Activated T-helper 1 cell treated with anti-CD3 and anti-CD28 coated beads, Interleukin-12 subunit alpha, Interleukin-12 subunit beta, Interleukin-2, Interleukin-4 antibody, amounts not matched to agents 30 ng/mL and 10 ng/mL and 1 ng/mL, durations not matched to agents 14 hours and 24 hours and 36 hours (primary cell): ENCODE measurements at regions of chr12 and their contacts with region 1.

Region 1: DNA sequence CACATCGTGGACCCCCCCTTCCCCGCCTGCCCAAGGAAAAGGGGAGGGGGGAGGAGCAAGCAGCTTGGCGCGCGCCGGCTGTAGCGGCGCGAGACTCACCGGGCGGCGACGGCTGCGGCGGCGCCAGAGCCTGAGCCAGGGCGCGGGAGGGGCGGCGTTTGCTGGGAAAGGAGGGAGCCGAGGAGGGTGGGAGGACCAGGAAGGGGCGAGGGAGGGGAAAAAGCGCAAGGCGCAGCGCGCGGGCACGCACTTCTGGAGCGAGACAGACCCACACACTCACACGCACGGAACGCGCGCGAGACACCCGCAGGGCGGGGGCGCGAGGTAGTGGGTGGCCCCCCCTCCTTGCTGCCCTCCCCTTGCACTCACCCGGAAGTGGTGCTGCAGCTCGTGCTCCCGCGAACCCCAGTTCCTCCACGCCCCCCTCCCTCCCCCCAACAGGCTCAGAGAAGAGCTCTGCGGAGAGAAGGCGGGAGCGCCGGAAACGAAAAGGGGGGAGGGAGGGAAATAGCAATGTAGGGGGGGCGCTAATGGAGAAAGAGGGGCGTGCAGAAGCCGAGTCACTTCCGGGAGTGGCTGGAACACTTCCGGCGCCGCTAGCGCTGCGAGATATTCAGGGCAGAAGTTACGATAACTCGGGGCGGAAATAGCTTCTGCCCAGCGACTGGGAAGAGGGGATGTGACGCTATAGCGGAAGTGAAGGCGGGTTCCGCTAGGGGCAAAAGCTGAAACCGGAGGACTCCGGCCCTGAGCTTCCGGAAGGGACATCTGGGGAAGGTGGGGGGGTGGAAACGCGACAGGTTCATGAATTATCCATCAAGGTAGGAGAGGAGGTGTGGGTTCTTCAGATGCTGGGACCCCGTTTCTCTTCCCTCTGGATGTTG is at the start of gene ZNF384:
- DNase-seq: peak; percentile 94
- H3K4me3 Mint-ChIP-seq: peak within 1 kb of the TSS; percentile 97
- H3K27ac Mint-ChIP-seq: peak within 1 kb of the TSS; percentile 87
- H3K4me1 Mint-ChIP-seq: peaks cover 58% of the 10 kb centered on the region
- H3K27me3 Mint-ChIP-seq: no peaks in the 10 kb centered on the region
- total RNA-seq, gene ZNF384: 79.6 and 89.8 TPM in 2 replicates

Region 2: DNA sequence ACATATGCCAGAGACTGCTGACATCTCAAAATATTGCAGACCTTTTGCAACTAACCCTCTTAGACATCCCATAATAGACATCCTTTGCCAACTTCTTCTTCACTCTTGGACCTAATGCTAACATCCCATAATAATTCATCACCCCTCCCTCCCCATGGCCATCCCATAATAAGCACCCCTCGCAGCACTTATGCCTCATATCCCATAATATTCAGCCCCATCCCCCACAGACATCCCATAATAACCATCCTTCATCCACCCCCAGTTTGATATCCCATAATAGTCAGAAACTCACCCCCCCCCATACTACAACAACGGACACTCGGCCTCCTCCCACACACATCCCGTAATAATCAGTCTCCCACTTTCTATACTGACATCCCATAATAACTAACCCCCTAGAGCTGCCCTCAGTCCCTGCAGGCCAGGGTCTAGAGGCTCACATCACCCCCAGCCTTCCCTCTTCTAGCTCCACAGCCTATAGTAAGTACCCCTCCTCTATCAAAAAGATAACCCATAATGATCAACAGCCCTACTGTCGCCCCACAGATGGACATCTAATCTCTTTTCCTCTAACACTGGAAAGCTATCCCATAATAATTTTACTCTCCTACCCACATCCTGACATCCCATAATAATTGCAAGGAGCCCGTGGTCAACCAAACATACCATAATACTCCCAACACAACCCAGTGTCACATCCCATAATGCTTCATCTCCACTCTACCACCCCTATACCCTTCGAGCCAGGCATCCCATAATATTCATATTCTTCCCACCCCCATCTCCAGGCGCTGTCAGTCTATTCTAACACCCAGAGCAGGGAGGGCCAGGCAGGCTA is 81.3 kb before region 1 on chr12:
- intact Hi-C with region 1: loop called (anchors 1 kb)
- DNase-seq: peak; percentile 51
- H3K4me3 Mint-ChIP-seq: no peak overlapping the region
- H3K27ac Mint-ChIP-seq: no peak overlapping the region
- H3K4me1 Mint-ChIP-seq: peaks cover 47% of the 10 kb centered on the region
- H3K27me3 Mint-ChIP-seq: no peaks in the 10 kb centered on the region

Region 3: GRCh38 chr12:6723607-6724396 is 34.6 kb after region 1 on chr12 and contains the start of gene COPS7A:
- intact Hi-C with region 1: loop called (anchors 1 kb)
- DNase-seq: peak; percentile 98
- H3K4me3 Mint-ChIP-seq: peak within 1 kb of the TSS; percentile 92
- H3K27ac Mint-ChIP-seq: peak within 1 kb of the TSS; percentile 91
- H3K4me1 Mint-ChIP-seq: peaks cover 33% of the 10 kb centered on the region
- H3K27me3 Mint-ChIP-seq: no peaks in the 10 kb centered on the region
- total RNA-seq, gene COPS7A: 34.6 and 36.2 TPM in 2 replicates

Region 4: DNA sequence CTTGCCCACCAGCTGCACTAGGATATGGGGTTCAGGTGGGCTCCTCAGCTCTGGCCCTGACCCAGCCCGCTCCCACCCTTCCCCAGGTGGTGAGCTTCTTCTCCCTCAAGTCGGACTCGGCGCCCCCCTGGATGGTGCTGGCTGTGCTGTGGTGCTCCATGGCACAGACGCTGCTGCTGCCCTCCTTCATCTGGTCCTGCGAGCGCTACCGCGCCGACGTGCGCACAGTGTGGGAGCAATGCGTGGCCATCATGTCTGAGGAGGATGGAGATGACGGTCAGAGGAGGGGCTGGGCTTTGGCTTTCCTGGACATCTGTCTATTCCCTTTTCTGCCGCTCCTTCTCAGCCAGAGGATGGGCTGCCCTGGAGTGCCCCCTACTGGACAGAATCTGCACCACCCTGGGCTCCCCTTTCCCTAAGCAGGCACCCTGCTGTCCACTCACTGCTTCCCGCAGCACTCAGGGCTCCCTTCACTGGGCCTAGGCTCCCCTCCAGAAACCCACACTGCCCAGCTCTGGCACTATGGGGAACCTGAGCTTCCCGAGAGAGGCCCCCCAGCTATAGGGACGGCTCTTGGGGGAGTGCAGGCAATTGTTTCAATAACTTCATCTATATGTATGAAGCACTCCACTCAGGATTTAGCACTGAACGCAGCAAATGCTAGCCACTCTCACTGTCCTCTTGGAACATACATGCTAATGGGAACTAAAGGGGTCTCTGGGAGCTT is 136.3 kb after region 1 on chr12:
- intact Hi-C with region 1: loop called (anchors 2 kb)
- DNase-seq: peak; percentile 72
- H3K4me3 Mint-ChIP-seq: peak overlapping the region; percentile 40
- H3K27ac Mint-ChIP-seq: peak overlapping the region; percentile 59
- H3K4me1 Mint-ChIP-seq: peaks cover 46% of the 10 kb centered on the region
- H3K27me3 Mint-ChIP-seq: peaks cover 46% of the 10 kb centered on the region

Region 5: DNA sequence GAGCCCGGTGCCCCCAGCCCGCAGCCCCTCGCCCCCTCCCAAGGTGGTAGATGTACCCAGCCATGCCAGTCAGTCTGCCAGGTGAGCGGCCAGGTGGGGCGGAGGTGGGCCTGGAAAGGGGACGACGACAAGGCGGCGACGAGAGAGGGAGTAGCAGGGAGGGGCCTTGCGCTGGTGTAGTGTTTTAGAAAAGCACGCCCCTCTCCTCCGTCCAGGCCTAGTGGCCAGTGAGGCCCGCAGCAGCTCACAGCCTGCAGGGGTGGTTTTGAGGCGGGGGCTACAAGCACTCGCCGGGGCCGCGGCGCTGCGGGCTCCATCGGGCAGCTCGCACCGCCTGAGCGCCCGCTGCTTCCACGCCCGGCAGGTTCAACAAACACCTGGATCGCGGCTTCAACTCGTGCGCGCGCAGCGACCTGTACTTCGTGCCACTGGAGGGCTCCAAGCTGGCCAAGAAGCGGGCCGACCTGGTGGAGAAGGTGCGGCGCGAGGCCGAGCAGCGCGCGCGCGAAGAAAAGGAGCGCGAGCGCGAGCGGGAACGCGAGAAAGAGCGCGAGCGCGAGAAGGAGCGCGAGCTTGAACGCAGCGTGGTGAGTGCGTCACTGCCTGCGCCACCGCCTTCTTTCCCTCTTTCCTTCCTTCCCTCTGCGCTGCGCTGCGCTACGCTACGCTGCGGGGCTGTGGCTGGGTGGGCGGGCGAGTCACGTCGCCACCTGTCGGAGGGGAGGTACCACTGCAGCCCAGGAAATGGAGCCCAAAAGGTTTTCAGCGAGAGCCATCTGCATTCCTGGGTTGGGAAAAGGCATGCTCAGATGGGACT is 248.4 kb after region 1 on chr12:
- intact Hi-C with region 1: loop called (anchors 1 kb)
- DNase-seq: peak; percentile 91
- H3K4me3 Mint-ChIP-seq: peak overlapping the region; percentile 88
- H3K27ac Mint-ChIP-seq: peak overlapping the region; percentile 98
- H3K4me1 Mint-ChIP-seq: peaks cover 59% of the 10 kb centered on the region
- H3K27me3 Mint-ChIP-seq: no peaks in the 10 kb centered on the region